Activated B cell treated with CpG ODN at 0.5 μM for 24 hours (primary cell): ENCODE measurements at regions of chr18 and their contacts with region 1.

Region 1: GRCh38 chr18:13566941-13567746 is 159.2 kb downstream of the FAM210A start:
- DNase-seq: peak; percentile 62
- ATAC-seq: peak; percentile 53
- H3K4me3 Mint-ChIP-seq: peak overlapping the region; percentile 81
- H3K27ac Mint-ChIP-seq: peak overlapping the region; percentile 99
- H3K4me1 Mint-ChIP-seq: peaks cover 83% of the 10 kb centered on the region
- H3K27me3 Mint-ChIP-seq: no peaks in the 10 kb centered on the region
- CTCF ChIP-seq: no peak

Region 2: DNA sequence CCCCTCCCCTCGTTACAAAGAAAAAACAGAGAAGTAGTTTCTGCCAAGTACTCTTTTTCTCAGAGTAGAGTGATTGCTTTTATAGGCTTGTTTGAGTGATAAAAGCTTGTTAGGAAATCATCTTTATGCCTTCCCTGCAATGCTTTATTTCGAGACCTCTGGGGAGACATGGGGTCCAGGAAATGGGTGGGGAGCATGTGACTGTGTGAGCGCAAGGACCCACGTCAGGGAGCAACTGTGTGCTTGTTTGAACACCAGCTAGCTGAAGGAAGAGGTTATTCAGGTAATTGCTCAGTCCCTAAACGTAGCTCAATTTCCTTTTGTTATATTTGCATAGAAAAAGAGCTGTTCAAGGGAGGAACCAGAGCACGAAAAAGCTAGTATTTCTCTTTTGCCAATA is 28.1 kb before region 1 on chr18:
- CTCF ChIA-PET with region 1: no interaction called
- POLR2A ChIA-PET with region 1: interaction called, 4 read pairs
- intact Hi-C with region 1: loop called (anchors 1 kb)
- DNase-seq: no peak
- ATAC-seq: peak; percentile 81
- H3K4me3 Mint-ChIP-seq: peak overlapping the region; percentile 75
- H3K27ac Mint-ChIP-seq: peak overlapping the region; percentile 85
- H3K4me1 Mint-ChIP-seq: peaks cover 44% of the 10 kb centered on the region
- H3K27me3 Mint-ChIP-seq: no peaks in the 10 kb centered on the region
- CTCF ChIP-seq: no peak

Region 3: GRCh38 chr18:13577091-13577697 is 10.1 kb after region 1 on chr18:
- CTCF ChIA-PET with region 1: interaction called, 6 read pairs
- POLR2A ChIA-PET with region 1: interaction called, 232 read pairs
- intact Hi-C with region 1: loop called (anchors 1 kb)
- DNase-seq: no peak
- ATAC-seq: peak; percentile 86
- H3K4me3 Mint-ChIP-seq: peak overlapping the region; percentile 68
- H3K27ac Mint-ChIP-seq: peak overlapping the region; percentile 86
- H3K4me1 Mint-ChIP-seq: peaks cover 49% of the 10 kb centered on the region
- H3K27me3 Mint-ChIP-seq: no peaks in the 10 kb centered on the region
- CTCF ChIP-seq: no peak

Region 4: DNA sequence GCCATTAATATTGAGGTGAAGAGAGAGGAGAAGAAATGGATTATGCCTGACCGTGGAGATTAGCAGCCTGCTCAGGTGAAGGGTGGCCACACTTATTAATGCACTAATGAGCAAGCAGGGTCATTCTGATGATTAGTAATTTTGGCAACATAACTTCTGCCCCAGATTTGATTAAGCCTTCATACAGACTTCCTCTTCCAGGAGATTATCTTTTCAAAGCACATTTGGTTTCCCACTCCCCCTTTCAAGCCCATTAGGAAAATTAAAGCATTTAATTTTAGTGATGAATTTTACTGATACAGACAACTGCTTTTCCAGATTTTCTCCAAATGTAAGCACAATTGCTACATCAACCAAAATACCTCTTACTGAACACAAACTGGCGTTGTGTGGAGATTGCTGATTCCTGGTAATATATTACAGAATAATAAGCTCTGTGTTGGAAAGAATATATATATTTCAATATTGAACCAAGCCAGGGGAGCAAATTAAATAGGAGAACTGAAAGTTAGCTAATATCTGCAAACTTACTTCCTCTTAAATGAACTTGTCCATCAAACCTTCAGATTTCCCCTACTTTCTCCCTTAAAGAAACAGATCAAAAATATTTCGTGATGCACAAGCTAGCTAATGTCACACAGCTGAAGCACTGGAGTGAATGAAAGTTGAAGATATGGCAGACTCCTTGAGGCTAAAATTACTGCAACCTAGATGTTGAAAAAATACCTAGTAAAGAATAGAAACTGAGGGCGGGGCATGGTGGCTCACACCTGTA is 18.4 kb after region 1 on chr18:
- CTCF ChIA-PET with region 1: interaction called, 8 read pairs
- POLR2A ChIA-PET with region 1: interaction called, 232 read pairs
- intact Hi-C with region 1: loop called (anchors 1 kb)
- DNase-seq: no peak
- ATAC-seq: peak; percentile 80
- H3K4me3 Mint-ChIP-seq: peak overlapping the region; percentile 76
- H3K27ac Mint-ChIP-seq: peak overlapping the region; percentile 98
- H3K4me1 Mint-ChIP-seq: peaks cover 63% of the 10 kb centered on the region
- H3K27me3 Mint-ChIP-seq: no peaks in the 10 kb centered on the region
- CTCF ChIP-seq: no peak

Region 5: DNA sequence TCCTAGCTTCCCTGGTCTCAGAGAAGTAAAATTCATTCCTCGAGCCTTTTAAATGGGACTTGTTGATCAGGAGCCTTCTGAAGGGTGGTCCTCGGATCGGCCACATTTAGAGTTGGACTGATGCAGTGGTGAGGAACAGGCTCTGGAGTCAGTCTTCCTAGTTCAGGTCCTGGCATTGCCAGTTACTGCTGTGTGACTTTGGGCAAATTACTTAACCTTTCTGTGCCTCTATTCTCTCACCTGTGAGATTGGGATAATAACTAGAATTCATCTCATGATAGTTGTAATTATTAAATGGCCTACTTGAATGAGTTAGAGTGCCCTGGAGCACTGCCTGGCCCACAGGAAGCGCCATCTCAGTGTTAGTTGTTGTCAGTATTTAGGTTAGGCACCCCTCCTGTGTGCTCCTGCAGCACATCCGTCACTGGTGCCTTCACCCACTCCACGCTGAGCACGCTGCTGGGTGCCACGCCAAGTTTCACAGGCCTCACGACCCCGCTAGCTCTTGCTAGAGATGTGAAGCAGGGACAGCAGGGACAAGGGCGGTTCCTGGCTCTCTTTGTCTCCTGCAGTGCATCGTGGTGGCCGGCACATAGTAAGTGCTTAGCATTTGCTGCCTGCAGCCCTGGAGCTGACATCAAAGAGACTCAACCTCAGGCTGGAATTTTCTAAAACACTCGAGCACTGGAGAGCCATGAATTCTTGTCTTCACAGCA is 36.3 kb after region 1 on chr18:
- CTCF ChIA-PET with region 1: interaction called, 171 read pairs
- POLR2A ChIA-PET with region 1: interaction called, 1,007 read pairs
- intact Hi-C with region 1: no loop called
- DNase-seq: no peak
- ATAC-seq: no peak
- H3K4me3 Mint-ChIP-seq: no peak overlapping the region
- H3K27ac Mint-ChIP-seq: no peak overlapping the region
- H3K4me1 Mint-ChIP-seq: peaks cover 20% of the 10 kb centered on the region
- H3K27me3 Mint-ChIP-seq: no peaks in the 10 kb centered on the region
- CTCF ChIP-seq: no peak

Region 6: GRCh38 chr18:13629841-13630715 is 62.9 kb after region 1 on chr18:
- CTCF ChIA-PET with region 1: interaction called, 121 read pairs
- POLR2A ChIA-PET with region 1: interaction called, 20 read pairs
- intact Hi-C with region 1: loop called (anchors 1 kb)
- DNase-seq: no peak
- ATAC-seq: peak; percentile 95
- H3K4me3 Mint-ChIP-seq: peak overlapping the region; percentile 17
- H3K27ac Mint-ChIP-seq: peak overlapping the region; percentile 63
- H3K4me1 Mint-ChIP-seq: peaks cover 24% of the 10 kb centered on the region
- H3K27me3 Mint-ChIP-seq: no peaks in the 10 kb centered on the region
- CTCF ChIP-seq: peak; percentile 68